Panc1 (cell line): ENCODE measurements at regions of chr10 and their contacts with region 1.

Region 1: DNA sequence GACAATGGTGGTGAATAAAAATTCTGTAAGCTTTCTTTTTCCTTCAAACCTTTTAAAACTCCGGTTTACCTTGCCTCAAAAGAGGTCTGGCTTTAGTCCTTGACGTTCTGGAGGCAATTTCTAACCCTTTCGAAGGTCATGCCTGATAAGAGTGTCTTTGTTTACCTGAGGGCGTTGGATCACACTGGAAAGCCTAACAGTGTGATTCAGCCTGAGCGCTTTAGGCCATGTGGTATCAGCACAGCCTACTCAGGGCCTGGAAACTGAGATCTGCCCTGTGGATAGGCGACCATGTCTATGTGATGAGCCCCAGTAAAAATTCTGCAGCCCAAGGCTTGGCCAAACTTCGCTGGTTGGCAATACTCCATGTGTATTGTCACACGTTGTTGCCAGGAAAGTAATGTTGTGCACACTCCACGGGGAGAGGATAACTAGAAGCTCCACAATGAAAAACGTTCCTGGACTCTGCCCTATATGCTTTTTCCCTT is 10.7 kb downstream of the CCDC6 start:
- DNase-seq: no peak
- ATAC-seq: no peak; the same call in 1 of the 2 replicates
- H3K4me3 ChIP-seq: no peak overlapping the region
- H3K27ac ChIP-seq: no peak overlapping the region
- H3K4me1 ChIP-seq: peaks cover 10% of the 10 kb centered on the region
- H3K27me3 ChIP-seq: no peaks in the 10 kb centered on the region
- CTCF ChIP-seq: no peak

Region 2: DNA sequence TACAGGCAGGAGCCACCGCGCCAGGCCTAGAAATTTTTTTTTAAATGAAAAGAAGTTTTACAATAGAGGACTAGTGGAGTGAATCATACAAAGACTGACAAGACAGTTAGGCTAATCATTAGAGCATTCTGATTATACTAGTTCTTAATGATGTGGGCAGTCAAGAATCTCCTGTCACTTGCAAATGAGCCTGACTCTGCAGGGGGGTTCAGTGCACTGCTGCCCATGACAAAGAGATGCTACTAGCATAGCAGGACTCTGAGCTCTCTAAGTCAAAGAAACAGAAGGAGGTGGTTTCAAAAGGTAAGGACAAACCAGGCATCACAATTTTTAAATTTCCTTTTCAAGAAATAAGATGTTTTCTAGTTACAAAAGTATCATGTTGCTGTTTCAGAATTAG is 48.3 kb before region 1 on chr10:
- CTCF ChIA-PET with region 1: no interaction called
- POLR2A ChIA-PET with region 1: no interaction called
- in situ Hi-C with region 1: no loop called
- intact Hi-C with region 1: loop called (anchors 5 kb)
- DNase-seq: no peak
- ATAC-seq: no peak
- H3K4me3 ChIP-seq: no peak overlapping the region
- H3K27ac ChIP-seq: no peak overlapping the region
- H3K4me1 ChIP-seq: no peaks in the 10 kb centered on the region
- H3K27me3 ChIP-seq: no peaks in the 10 kb centered on the region
- CTCF ChIP-seq: no peak

Region 3: GRCh38 chr10:59877191-59877671 is 18.4 kb before region 1 on chr10:
- CTCF ChIA-PET with region 1: no interaction called
- POLR2A ChIA-PET with region 1: interaction called, 21 read pairs
- in situ Hi-C with region 1: no loop called
- intact Hi-C with region 1: no loop called
- DNase-seq: no peak
- ATAC-seq: no peak
- H3K4me3 ChIP-seq: no peak overlapping the region
- H3K27ac ChIP-seq: no peak overlapping the region
- H3K4me1 ChIP-seq: no peaks in the 10 kb centered on the region
- H3K27me3 ChIP-seq: no peaks in the 10 kb centered on the region
- CTCF ChIP-seq: no peak